CD8-positive, alpha-beta memory T cell (primary cell): ENCODE measurements at regions of chr10 and their contacts with region 1.

Region 1: DNA sequence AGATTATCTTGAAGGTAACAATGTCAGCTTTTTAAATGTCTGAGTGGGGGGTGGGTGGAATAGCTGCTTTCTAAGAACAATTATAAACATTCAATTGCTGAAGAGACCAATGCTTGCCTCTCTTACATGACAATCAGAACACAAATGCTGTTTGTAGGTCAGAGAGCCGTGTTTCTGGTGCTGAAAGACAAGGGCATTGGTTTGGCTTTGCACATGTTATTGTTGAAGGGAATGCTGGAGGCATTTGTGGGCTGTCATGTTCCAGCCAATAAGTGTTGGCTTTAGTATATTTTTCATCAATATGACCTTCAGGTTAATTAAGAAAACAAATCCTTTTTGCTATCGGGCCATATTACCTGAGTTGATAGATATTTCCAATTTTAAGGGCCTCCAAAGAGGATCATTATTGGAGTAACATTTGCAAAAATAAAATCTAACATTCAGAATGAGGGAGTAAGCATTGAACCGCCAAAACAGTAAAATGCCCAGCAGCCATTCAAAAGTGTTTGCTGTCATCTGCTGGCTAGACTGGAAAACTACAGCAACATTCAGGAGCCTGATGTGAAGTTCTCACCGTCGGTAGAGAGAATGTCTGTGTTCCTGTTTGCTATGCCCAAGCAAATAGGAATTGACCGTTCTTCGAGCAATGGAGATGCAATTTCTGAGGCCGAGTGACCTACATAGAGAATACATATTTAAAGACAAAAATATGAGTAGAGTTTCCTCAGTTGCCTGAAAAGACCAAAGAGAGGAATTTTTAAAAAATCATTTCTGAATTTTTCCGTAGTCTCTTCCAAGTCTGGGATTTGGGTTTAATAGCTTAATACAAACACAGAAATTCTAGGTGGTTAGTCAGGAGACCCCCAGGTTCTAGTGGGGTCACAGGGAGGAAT is 118.9 kb downstream of the APBB1IP start:
- DNase-seq: peak in 3 of 5 donors; percentile 29 to 49 (median 48)
- H3K4me3 ChIP-seq: no peak overlapping the region
- H3K4me3 Mint-ChIP-seq: peak overlapping the region in 1 of 7 donors; percentile 48
- H3K27ac ChIP-seq: no peak overlapping the region
- H3K27ac Mint-ChIP-seq: peak overlapping the region in 6 of 8 donors; percentile 2 to 78 (median 30)
- H3K4me1 ChIP-seq: no peaks in the 10 kb centered on the region
- H3K4me1 Mint-ChIP-seq: peaks cover 6 to 16% (median 7%) of the 10 kb centered on the region in 3 donors
- H3K27me3 ChIP-seq: no peaks in the 10 kb centered on the region
- H3K27me3 Mint-ChIP-seq: no peaks in the 10 kb centered on the region

Region 2: GRCh38 chr10:26334932-26335573 is 221.9 kb before region 1 on chr10:
- CTCF ChIA-PET with region 1: interaction called, 18 read pairs
- POLR2A ChIA-PET with region 1: no interaction called
- DNase-seq: peak; percentile 41 to 76 (median 60)
- H3K4me3 ChIP-seq: peak overlapping the region; percentile 62
- H3K4me3 Mint-ChIP-seq: peak overlapping the region; percentile 73 to 87 (median 82)
- H3K27ac ChIP-seq: no peak overlapping the region
- H3K27ac Mint-ChIP-seq: peak overlapping the region in 5 of 8 donors; percentile 7 to 79 (median 62)
- H3K4me1 ChIP-seq: no peaks in the 10 kb centered on the region
- H3K4me1 Mint-ChIP-seq: peaks cover 0 to 9% (median 5%) of the 10 kb centered on the region in 3 donors
- H3K27me3 ChIP-seq: no peaks in the 10 kb centered on the region
- H3K27me3 Mint-ChIP-seq: peaks cover 0 to 3% of the 10 kb centered on the region in 2 donors

Region 3: GRCh38 chr10:26621889-26622711 is 65.1 kb after region 1 on chr10:
- CTCF ChIA-PET with region 1: no interaction called
- POLR2A ChIA-PET with region 1: no interaction called
- DNase-seq: peak in 1 of 5 donors; percentile 26
- H3K4me3 ChIP-seq: peak overlapping the region; percentile 38
- H3K4me3 Mint-ChIP-seq: peak overlapping the region in 4 of 7 donors; percentile 21 to 33 (median 31)
- H3K27ac ChIP-seq: no peak overlapping the region
- H3K27ac Mint-ChIP-seq: peak overlapping the region in 1 of 8 donors; percentile 3
- H3K4me1 ChIP-seq: peaks cover 5% of the 10 kb centered on the region
- H3K4me1 Mint-ChIP-seq: no peaks in the 10 kb centered on the region
- H3K27me3 ChIP-seq: peaks cover 8% of the 10 kb centered on the region
- H3K27me3 Mint-ChIP-seq: peaks cover 15 to 60% of the 10 kb centered on the region in 2 donors